ENCODE measurements at regions of chr5 and their contacts with region 1.

Region 1: GRCh38 chr5:169980418-169981053 is at the start of gene INSYN2B:
- DNase-seq: no peak
- ATAC-seq: no peak
- H3K4me3 Mint-ChIP-seq: no peak within 1 kb of the TSS
- H3K27ac Mint-ChIP-seq: no peak within 1 kb of the TSS
- H3K4me1 Mint-ChIP-seq: peaks cover 9% of the 10 kb centered on the region
- H3K27me3 Mint-ChIP-seq: no peaks in the 10 kb centered on the region
- CTCF ChIP-seq: no peak
- total RNA-seq, gene INSYN2B: not detected in 2 replicates

Region 2: GRCh38 chr5:168987543-168988300 is 992.8 kb before region 1 on chr5:
- CTCF ChIA-PET with region 1: no interaction called
- POLR2A ChIA-PET with region 1: no interaction called
- intact Hi-C with region 1: loop called (anchors 5 kb)
- DNase-seq: no peak
- ATAC-seq: no peak
- H3K4me3 Mint-ChIP-seq: no peak overlapping the region
- H3K27ac Mint-ChIP-seq: no peak overlapping the region
- H3K4me1 Mint-ChIP-seq: no peaks in the 10 kb centered on the region
- H3K27me3 Mint-ChIP-seq: peaks cover 12% of the 10 kb centered on the region
- CTCF ChIP-seq: no peak

Region 3: GRCh38 chr5:169701910-169702451 is 278.6 kb before region 1 on chr5:
- CTCF ChIA-PET with region 1: interaction called, 11 read pairs
- POLR2A ChIA-PET with region 1: no interaction called
- intact Hi-C with region 1: loop called (anchors 1 kb)
- DNase-seq: no peak
- ATAC-seq: no peak
- H3K4me3 Mint-ChIP-seq: no peak overlapping the region
- H3K27ac Mint-ChIP-seq: peak overlapping the region; percentile 81
- H3K4me1 Mint-ChIP-seq: peaks cover 51% of the 10 kb centered on the region
- H3K27me3 Mint-ChIP-seq: no peaks in the 10 kb centered on the region
- CTCF ChIP-seq: no peak

Region 4: GRCh38 chr5:170080217-170080616 is 99.7 kb after region 1 on chr5:
- CTCF ChIA-PET with region 1: no interaction called
- POLR2A ChIA-PET with region 1: no interaction called
- intact Hi-C with region 1: no loop called
- DNase-seq: no peak
- ATAC-seq: no peak
- H3K4me3 Mint-ChIP-seq: no peak overlapping the region
- H3K27ac Mint-ChIP-seq: no peak overlapping the region
- H3K4me1 Mint-ChIP-seq: no peaks in the 10 kb centered on the region
- H3K27me3 Mint-ChIP-seq: no peaks in the 10 kb centered on the region
- CTCF ChIP-seq: no peak